ENCODE measurements at regions of chr4 and their contacts with region 1.

Region 1: GRCh38 chr4:76108467-76109181 is 34.1 kb downstream of the ART3 start:
- DNase-seq: no peak
- ATAC-seq: no peak
- H3K4me3 Mint-ChIP-seq: no peak overlapping the region
- H3K27ac Mint-ChIP-seq: no peak overlapping the region
- H3K4me1 Mint-ChIP-seq: no peaks in the 10 kb centered on the region
- H3K27me3 Mint-ChIP-seq: no peaks in the 10 kb centered on the region

Region 2: DNA sequence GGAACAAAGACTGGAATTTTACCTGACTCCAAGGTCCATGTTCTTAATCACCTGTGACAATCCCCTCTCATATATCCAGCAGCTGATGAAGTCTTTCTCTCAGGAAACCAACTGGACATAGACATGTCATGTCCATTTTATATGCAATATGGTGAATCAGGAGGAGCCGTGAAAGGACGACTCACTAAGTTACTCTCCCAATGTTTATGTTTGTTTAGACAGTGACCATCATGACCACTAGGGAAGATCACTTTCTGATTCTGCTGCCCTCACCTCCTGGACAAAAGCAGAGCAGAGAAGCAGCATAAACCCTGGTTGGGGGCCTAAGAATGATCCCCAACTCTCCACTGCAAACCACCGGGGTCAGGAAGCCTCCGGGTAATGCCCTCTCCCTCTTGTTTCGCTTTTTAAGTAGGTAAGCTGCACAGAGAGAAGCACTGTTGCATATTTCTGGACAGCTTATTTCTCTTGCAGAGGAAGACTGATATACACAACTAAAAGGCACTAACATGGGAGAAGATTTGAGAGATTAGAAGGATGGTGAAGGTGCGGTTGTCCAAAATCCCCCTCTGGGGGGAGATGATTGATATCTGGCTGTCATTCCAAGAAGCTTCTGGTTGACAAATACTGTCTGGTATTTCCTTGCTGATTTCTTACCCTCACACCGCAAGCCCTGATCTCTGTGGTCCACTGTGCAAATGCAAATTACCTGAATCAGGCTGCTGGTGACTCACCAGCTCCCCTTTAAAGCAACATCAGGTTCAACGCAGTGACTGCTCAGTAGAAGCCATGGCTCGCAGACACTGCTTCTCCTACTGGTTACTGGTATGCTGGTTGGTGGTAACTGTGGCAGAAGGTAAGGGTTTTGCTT is 553.1 kb before region 1 on chr4 and contains the start of gene ODAPH:
- CTCF ChIA-PET with region 1: no interaction called
- POLR2A ChIA-PET with region 1: no interaction called
- intact Hi-C with region 1: no loop called
- DNase-seq: peak; percentile 47
- ATAC-seq: peak; percentile 86
- H3K4me3 Mint-ChIP-seq: no peak within 1 kb of the TSS
- H3K27ac Mint-ChIP-seq: no peak within 1 kb of the TSS
- H3K4me1 Mint-ChIP-seq: no peaks in the 10 kb centered on the region
- H3K27me3 Mint-ChIP-seq: peaks cover 2% of the 10 kb centered on the region
- total RNA-seq, gene ODAPH: not detected

Region 3: DNA sequence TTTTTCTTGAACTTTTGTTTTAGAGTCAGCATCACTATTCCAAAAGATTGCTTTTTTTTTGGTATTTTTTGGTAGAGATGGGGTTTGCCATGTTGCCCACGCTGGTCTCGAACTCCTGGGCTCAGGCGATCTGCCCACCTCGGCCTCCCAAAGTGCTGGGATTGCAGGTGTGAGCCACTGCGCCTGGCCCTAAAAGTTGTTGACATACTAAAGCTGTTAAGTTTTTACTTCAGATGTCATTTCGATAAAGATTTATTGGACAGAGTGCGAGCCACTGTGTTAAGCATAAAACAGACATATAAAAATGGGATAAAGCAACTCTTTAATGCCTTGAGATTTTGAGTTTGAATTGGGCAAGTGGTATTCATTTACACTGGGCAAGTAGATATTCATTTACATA is 356.0 kb before region 1 on chr4:
- CTCF ChIA-PET with region 1: no interaction called
- POLR2A ChIA-PET with region 1: no interaction called
- intact Hi-C with region 1: loop called in 1 of 2 experiments (anchors 10 kb)
- DNase-seq: no peak
- ATAC-seq: no peak
- H3K4me3 Mint-ChIP-seq: no peak overlapping the region
- H3K27ac Mint-ChIP-seq: no peak overlapping the region
- H3K4me1 Mint-ChIP-seq: no peaks in the 10 kb centered on the region
- H3K27me3 Mint-ChIP-seq: no peaks in the 10 kb centered on the region

Region 4: GRCh38 chr4:76578002-76578560 is 469.5 kb after region 1 on chr4:
- CTCF ChIA-PET with region 1: no interaction called
- POLR2A ChIA-PET with region 1: no interaction called
- intact Hi-C with region 1: no loop called
- DNase-seq: no peak
- ATAC-seq: no peak
- H3K4me3 Mint-ChIP-seq: no peak overlapping the region
- H3K27ac Mint-ChIP-seq: no peak overlapping the region
- H3K4me1 Mint-ChIP-seq: no peaks in the 10 kb centered on the region
- H3K27me3 Mint-ChIP-seq: peaks cover 18% of the 10 kb centered on the region